ENCODE measurements at regions of chr16 and their contacts with region 1.

Region 1: GRCh38 chr16:68689925-68690324 is 44.8 kb downstream of the CDH3 start:
- DNase-seq: no peak
- CTCF ChIP-seq: no peak

Region 2: DNA sequence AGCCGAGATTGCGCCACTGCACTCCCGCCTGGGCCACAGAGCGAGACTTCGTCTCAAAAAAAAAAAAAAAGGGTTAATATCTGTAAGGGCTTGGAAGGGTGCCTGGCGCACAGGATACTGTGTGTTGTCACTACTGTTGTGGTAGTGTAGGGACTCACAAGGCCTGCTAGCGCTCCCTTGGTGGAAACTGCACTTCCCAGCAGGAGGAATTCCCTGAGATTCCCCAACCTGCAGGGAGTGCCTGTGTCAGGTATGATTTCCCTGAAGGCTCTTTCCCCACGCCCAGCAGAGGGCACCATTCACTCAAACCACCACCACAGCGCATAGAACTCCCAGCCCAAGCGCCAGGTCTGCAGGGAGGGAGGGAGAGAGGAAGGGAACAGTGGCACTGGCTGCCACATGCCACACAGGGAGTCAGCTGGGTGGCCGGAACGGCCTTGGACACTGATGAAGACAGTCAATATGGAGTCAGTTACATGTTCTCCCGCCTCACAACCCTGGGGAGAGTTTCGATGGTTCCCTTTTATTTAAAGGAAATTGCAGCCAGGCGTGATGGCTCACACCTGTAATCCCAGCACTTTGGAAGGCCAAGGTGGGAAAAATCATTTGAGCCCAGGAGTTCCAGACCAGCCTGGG is 14.4 kb after region 1 on chr16:
- CTCF ChIA-PET with region 1: interaction called, 11 read pairs
- POLR2A ChIA-PET with region 1: no interaction called
- DNase-seq: peak; percentile 81
- CTCF ChIP-seq: peak; percentile 84